B cell (primary cell): ENCODE measurements at regions of chr12 and their contacts with region 1.

Region 1: GRCh38 chr12:7108796-7109571 is at the start of gene C1RL:
- DNase-seq: peak; percentile 83
- ATAC-seq: peak; percentile 50
- H3K4me3 ChIP-seq: peak within 1 kb of the TSS; percentile 74 to 94 (median 89)
- H3K4me3 Mint-ChIP-seq: peak within 1 kb of the TSS; percentile 97
- H3K27ac ChIP-seq: peak within 1 kb of the TSS; percentile 63 to 76
- H3K27ac Mint-ChIP-seq: peak within 1 kb of the TSS; percentile 98
- H3K4me1 ChIP-seq: peaks cover 12 to 18% of the 10 kb centered on the region in 2 donors
- H3K4me1 Mint-ChIP-seq: peaks cover 28% of the 10 kb centered on the region
- H3K27me3 ChIP-seq: no peaks in the 10 kb centered on the region
- H3K27me3 Mint-ChIP-seq: no peaks in the 10 kb centered on the region
- CTCF ChIP-seq: peak; percentile 92
- total RNA-seq, gene C1RL: 24.9 and 28.9 TPM in 2 replicates

Region 2: DNA sequence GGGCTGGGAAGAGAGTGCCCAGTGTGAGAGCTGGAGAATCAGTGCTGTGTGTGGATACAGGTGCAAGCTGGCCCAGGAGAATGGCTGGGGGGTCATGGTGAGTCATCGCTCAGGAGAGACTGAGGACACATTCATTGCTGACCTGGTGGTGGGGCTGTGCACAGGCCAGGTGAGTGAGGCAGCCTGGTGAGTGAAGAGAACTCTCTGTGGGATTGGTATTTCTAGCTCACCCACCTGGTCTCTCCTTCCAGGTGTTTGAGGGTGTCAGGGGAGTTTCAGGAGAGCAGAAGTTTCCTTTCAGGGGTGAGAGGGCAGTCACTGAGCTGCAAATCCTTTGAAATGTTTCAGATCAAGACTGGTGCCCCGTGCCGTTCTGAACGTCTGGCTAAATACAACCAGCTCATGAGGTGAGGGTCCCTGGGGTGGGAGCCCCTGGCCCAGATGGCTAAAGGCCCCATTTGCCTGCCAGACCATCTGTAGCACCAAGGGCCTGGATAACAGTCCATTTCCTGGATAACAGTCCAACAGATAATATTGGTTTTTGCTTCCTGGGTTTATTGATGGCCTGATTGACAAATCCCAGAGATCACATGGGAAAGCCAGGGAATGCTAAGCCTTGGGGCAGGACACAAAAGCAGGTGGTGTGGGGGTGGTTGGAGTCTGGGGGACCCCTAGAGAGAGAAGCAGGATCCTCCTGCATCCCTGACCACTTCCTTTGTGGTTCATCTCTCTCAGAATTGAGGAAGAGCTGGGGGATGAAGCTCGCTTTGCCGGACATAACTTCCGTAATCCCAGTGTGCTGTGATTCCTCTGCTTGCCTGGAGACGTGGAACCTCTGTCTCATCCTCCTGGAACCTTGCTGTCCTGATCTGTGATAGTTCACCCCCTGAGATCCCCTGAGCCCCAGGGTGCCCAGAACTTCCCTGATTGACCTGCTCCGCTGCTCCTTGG is 186.7 kb before region 1 on chr12:
- CTCF ChIA-PET with region 1: interaction called, 27 read pairs
- POLR2A ChIA-PET with region 1: no interaction called
- intact Hi-C with region 1: loop called (anchors 1 kb)
- DNase-seq: peak; percentile 59
- ATAC-seq: peak; percentile 23
- H3K4me3 ChIP-seq: no peak overlapping the region
- H3K4me3 Mint-ChIP-seq: peak overlapping the region; percentile 60
- H3K27ac ChIP-seq: peak overlapping the region; percentile 54 to 57
- H3K27ac Mint-ChIP-seq: peak overlapping the region; percentile 41
- H3K4me1 ChIP-seq: peaks cover 39 to 50% of the 10 kb centered on the region in 2 donors
- H3K4me1 Mint-ChIP-seq: peaks cover 50% of the 10 kb centered on the region
- H3K27me3 ChIP-seq: no peaks in the 10 kb centered on the region
- H3K27me3 Mint-ChIP-seq: no peaks in the 10 kb centered on the region
- CTCF ChIP-seq: no peak

Region 3: DNA sequence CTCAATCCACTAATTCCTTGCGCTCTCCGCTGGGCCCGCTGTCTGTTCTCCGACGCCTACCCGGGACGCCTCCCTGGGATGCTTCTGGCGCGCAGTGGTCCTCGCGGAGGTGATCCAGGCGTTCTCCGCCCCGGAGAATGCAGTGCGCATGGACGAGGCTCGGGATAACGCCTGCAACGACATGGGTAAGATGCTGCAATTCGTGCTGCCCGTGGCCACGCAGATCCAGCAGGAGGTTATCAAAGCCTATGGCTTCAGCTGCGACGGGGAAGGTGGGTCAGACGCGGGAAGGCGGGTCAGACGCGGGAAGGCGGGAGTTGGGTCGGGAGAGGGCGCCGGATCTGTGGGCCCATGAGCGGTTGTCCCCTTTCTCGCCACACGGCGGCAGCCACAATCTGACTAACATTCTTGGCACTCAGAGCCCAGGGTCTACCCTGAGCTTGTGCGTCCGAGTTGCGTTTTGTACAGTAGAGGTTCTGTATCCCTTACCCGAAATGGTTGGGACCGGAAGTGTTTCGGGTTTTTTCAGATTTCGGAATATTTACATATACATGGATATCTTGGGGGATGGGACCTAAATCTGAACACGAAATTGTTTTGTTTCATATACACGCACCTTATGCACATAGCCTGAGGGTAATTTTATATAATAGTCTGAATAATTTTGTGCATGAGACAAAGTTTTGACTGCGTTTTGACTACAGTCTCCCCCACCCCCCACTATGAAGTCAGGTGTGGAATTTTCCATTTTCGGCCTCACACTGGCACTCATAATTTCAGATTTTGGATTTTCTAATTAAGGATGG is 164.4 kb before region 1 on chr12:
- CTCF ChIA-PET with region 1: interaction called, 19 read pairs
- POLR2A ChIA-PET with region 1: interaction called, 7 read pairs
- intact Hi-C with region 1: loop called (anchors 2 kb)
- DNase-seq: peak; percentile 91
- ATAC-seq: peak; percentile 46
- H3K4me3 ChIP-seq: peak overlapping the region; percentile 25 to 92 (median 80)
- H3K4me3 Mint-ChIP-seq: peak overlapping the region; percentile 97
- H3K27ac ChIP-seq: peak overlapping the region; percentile 93 to 99
- H3K27ac Mint-ChIP-seq: peak overlapping the region; percentile 97
- H3K4me1 ChIP-seq: peaks cover 56 to 73% of the 10 kb centered on the region in 2 donors
- H3K4me1 Mint-ChIP-seq: peaks cover 63% of the 10 kb centered on the region
- H3K27me3 ChIP-seq: no peaks in the 10 kb centered on the region
- H3K27me3 Mint-ChIP-seq: no peaks in the 10 kb centered on the region
- CTCF ChIP-seq: peak; percentile 90

Region 4: GRCh38 chr12:7129872-7130680 is 21.1 kb after region 1 on chr12 and contains the start of gene CLSTN3:
- CTCF ChIA-PET with region 1: interaction called, 5 read pairs
- POLR2A ChIA-PET with region 1: no interaction called
- intact Hi-C with region 1: loop called (anchors 2 kb)
- DNase-seq: peak; percentile 91
- ATAC-seq: peak; percentile 90
- H3K4me3 ChIP-seq: peak within 1 kb of the TSS; percentile 53 to 92 (median 75)
- H3K4me3 Mint-ChIP-seq: peak within 1 kb of the TSS; percentile 98
- H3K27ac ChIP-seq: peak within 1 kb of the TSS; percentile 10 to 54
- H3K27ac Mint-ChIP-seq: peak within 1 kb of the TSS; percentile 87
- H3K4me1 ChIP-seq: peaks cover 16 to 26% of the 10 kb centered on the region in 2 donors
- H3K4me1 Mint-ChIP-seq: peaks cover 30% of the 10 kb centered on the region
- H3K27me3 ChIP-seq: no peaks in the 10 kb centered on the region
- H3K27me3 Mint-ChIP-seq: no peaks in the 10 kb centered on the region
- CTCF ChIP-seq: no peak
- total RNA-seq, gene CLSTN3: 36.5 and 41.2 TPM in 2 replicates